ENCODE measurements at regions of chr13 and their contacts with region 1.

Region 1: DNA sequence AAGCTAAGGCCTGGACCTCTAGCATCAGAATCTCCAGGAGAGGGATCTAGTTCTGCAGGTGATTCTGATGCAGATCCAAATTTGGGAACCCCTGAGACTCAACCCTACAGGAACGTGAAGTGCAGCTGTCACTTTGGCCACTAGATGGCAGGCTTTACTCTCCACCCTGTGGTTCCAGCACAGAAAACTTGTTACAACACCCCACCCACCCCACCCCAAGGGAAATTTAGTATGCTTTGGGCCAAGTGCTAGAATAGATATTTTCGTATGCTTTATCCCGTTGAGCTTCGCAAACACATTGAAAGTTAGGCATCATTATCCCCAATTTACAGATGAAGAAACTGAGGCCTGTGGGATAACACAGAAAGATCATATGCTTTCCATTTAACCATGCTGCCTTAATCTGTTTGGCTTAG is 232.0 kb downstream of the B3GLCT start:
- DNase-seq: no peak
- ATAC-seq: peak; percentile 85
- H3K4me3 ChIP-seq: no peak overlapping the region
- H3K27ac ChIP-seq: no peak overlapping the region
- H3K4me1 ChIP-seq: no peaks in the 10 kb centered on the region
- H3K27me3 ChIP-seq: no peaks in the 10 kb centered on the region
- CTCF ChIP-seq: peak; percentile 74 to 85 (median 74)
- EP300 ChIP-seq: no peak
- POLR2A ChIP-seq: no peak
- RAD21 ChIP-seq: peak; percentile 68

Region 2: DNA sequence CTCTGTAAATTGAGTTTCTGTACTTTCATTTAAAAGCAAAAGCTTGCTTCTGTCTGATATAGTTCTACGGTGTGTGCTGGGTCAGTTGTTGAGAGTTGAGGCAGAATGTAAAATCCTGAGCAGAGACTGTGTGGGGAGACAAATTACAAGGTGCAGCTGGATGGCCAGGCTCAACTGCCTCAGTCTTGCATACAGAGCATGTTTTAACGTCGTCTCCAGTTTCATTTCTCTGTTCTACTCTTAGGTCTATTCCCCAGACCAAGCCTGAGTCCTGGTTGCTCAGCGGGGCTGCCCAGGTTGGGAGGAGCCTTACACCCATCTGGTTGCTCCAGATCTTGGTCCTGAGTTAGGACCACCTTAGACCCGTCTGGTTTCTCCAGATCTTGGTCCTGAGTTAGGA is 580.0 kb before region 1 on chr13:
- CTCF ChIA-PET with region 1: no interaction called
- POLR2A ChIA-PET with region 1: no interaction called
- RAD21 ChIA-PET with region 1: no interaction called
- SMC1A ChIA-PET with region 1: no interaction called
- in situ Hi-C with region 1: no loop called
- intact Hi-C with region 1: no loop called
- DNase-seq: peak; percentile 33
- ATAC-seq: peak; percentile 90
- H3K4me3 ChIP-seq: no peak overlapping the region
- H3K27ac ChIP-seq: no peak overlapping the region
- H3K4me1 ChIP-seq: peaks cover 5% of the 10 kb centered on the region; the same call in 1 of the 2 replicates
- H3K27me3 ChIP-seq: no peaks in the 10 kb centered on the region
- CTCF ChIP-seq: no peak
- EP300 ChIP-seq: no peak
- POLR2A ChIP-seq: no peak
- RAD21 ChIP-seq: no peak

Region 3: GRCh38 chr13:31380715-31381114 is 51.0 kb before region 1 on chr13:
- CTCF ChIA-PET with region 1: no interaction called
- POLR2A ChIA-PET with region 1: no interaction called
- RAD21 ChIA-PET with region 1: no interaction called
- SMC1A ChIA-PET with region 1: no interaction called
- in situ Hi-C with region 1: loop called (anchors 5 kb)
- intact Hi-C with region 1: no loop called
- DNase-seq: no peak
- ATAC-seq: no peak
- H3K4me3 ChIP-seq: no peak overlapping the region
- H3K27ac ChIP-seq: no peak overlapping the region
- H3K4me1 ChIP-seq: no peaks in the 10 kb centered on the region
- H3K27me3 ChIP-seq: no peaks in the 10 kb centered on the region
- CTCF ChIP-seq: no peak
- EP300 ChIP-seq: no peak
- POLR2A ChIP-seq: no peak
- RAD21 ChIP-seq: no peak

Region 4: DNA sequence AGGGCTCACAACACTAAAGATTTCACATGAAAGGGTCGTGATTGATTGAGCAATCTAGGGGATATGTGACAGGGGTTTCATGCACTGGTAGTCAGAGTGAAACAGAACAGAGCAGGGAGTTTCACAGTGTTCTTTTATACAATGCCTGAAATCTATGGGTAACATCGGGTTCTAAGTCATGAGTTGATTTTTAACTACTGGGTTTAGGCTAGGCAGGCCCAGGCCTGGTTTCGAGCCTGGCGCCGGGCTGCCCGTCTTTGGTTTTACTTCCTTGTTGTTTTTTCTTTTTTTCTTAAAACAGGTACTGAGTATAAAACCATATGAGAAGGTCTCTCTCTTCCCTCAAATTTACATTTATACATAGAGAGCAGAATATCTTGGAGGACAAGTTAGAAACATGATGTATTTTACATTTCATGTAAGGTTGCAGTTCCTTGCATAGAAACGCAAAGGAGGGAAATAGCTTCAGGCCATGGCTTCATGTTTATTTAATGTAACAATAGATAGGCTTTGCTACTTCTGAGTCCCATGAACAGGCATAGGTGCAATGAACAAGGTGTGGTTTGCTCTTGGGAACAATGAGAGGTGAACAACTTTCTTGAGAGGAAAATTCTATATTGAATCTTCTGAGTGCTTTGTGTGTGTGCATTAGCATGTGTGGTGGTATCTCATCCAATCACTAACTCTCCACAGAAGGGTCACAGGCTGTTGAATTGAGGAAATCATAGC is 178.7 kb after region 1 on chr13:
- CTCF ChIA-PET with region 1: interaction called, 3 read pairs
- POLR2A ChIA-PET with region 1: no interaction called
- RAD21 ChIA-PET with region 1: no interaction called
- SMC1A ChIA-PET with region 1: no interaction called
- in situ Hi-C with region 1: no loop called
- intact Hi-C with region 1: loop called (anchors 10 kb)
- DNase-seq: no peak
- ATAC-seq: peak; percentile 79
- H3K4me3 ChIP-seq: no peak overlapping the region
- H3K27ac ChIP-seq: no peak overlapping the region
- H3K4me1 ChIP-seq: no peaks in the 10 kb centered on the region
- H3K27me3 ChIP-seq: no peaks in the 10 kb centered on the region
- CTCF ChIP-seq: no peak
- EP300 ChIP-seq: no peak
- POLR2A ChIP-seq: no peak
- RAD21 ChIP-seq: no peak

Region 5: DNA sequence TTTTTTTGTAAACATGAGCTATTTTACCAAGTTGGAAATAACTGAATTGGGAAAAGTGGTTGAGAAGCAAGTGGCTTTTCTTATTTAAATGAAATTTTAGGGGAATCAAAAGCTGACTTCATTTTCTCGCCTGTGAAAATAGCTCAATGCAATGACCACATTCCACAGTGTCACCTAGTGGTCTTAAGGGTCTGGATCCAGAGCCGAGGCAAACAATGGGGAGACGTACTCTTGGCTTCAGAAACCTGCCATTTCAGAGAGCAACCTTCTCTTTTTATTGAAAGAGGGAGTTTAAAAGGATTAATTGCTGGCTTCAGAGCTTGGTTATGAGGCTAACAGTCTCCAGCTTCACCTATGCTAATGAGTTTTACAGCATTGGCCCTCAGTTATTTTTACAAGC is 267.9 kb after region 1 on chr13:
- CTCF ChIA-PET with region 1: interaction called, 4 read pairs
- POLR2A ChIA-PET with region 1: no interaction called
- RAD21 ChIA-PET with region 1: interaction called, 3 read pairs
- SMC1A ChIA-PET with region 1: no interaction called
- in situ Hi-C with region 1: no loop called
- intact Hi-C with region 1: loop called (anchors 5 kb)
- DNase-seq: no peak
- ATAC-seq: no peak
- H3K4me3 ChIP-seq: no peak overlapping the region
- H3K27ac ChIP-seq: no peak overlapping the region
- H3K4me1 ChIP-seq: no peaks in the 10 kb centered on the region
- H3K27me3 ChIP-seq: 0 out of 4 replicates have a peak, but pooled peaks cover 0 to 4% of the 10 kb centered on the region in 2 experiments
- CTCF ChIP-seq: no peak; a peak in 1 of 6 replicates
- EP300 ChIP-seq: no peak
- POLR2A ChIP-seq: no peak
- RAD21 ChIP-seq: no peak

Region 6: GRCh38 chr13:31742097-31742734 is 310.5 kb after region 1 on chr13:
- CTCF ChIA-PET with region 1: interaction called, 52 read pairs
- POLR2A ChIA-PET with region 1: no interaction called
- RAD21 ChIA-PET with region 1: interaction called, 13 read pairs
- SMC1A ChIA-PET with region 1: interaction called, 18 read pairs
- in situ Hi-C with region 1: loop called (anchors 5 kb)
- intact Hi-C with region 1: loop called (anchors 1 kb)
- DNase-seq: peak; percentile 8
- ATAC-seq: peak; percentile 96
- H3K4me3 ChIP-seq: no peak overlapping the region
- H3K27ac ChIP-seq: no peak overlapping the region
- H3K4me1 ChIP-seq: no peaks in the 10 kb centered on the region
- H3K27me3 ChIP-seq: no peaks in the 10 kb centered on the region; a peak in 1 of 4 replicates
- CTCF ChIP-seq: peak; percentile 92 to 95 (median 93)
- EP300 ChIP-seq: no peak
- POLR2A ChIP-seq: no peak
- RAD21 ChIP-seq: peak; percentile 86

Region 7: GRCh38 chr13:32031025-32031814 is 599.5 kb after region 1 on chr13 and contains the start of gene FRY:
- CTCF ChIA-PET with region 1: no interaction called
- POLR2A ChIA-PET with region 1: no interaction called
- RAD21 ChIA-PET with region 1: no interaction called
- SMC1A ChIA-PET with region 1: no interaction called
- in situ Hi-C with region 1: no loop called
- intact Hi-C with region 1: no loop called
- DNase-seq: no peak
- ATAC-seq: peak; percentile 88
- H3K4me3 ChIP-seq: peak within 1 kb of the TSS; percentile 72
- H3K27ac ChIP-seq: no peak within 1 kb of the TSS
- H3K4me1 ChIP-seq: no peaks in the 10 kb centered on the region
- H3K27me3 ChIP-seq: no peaks in the 10 kb centered on the region
- CTCF ChIP-seq: peak in 1 of 3 experiments; percentile 14; a peak in 2 of 6 replicates
- EP300 ChIP-seq: 0 out of 4 replicates have a peak, but pooled peaks of 1 of the 2 experiments have one; percentile 8
- POLR2A ChIP-seq: no peak
- RAD21 ChIP-seq: peak; percentile 8; the same call in 1 of the 2 replicates
- polyA plus RNA-seq, gene FRY: 0.18 to 0.31 TPM

Measured in GM12878 (cell line).